Activated CD4-positive, alpha-beta memory T cell treated with anti-CD3 and anti-CD28 coated beads for 36 hours (primary cell): ENCODE measurements at regions of chr5 and their contacts with region 1.

Region 1: GRCh38 chr5:139765409-139766217 is 30.0 kb upstream of the PSD2 start:
- DNase-seq: peak; percentile 86
- H3K4me3 Mint-ChIP-seq: peak overlapping the region; percentile 50
- H3K27ac Mint-ChIP-seq: no peak overlapping the region
- H3K4me1 Mint-ChIP-seq: peaks cover 15% of the 10 kb centered on the region
- H3K27me3 Mint-ChIP-seq: peaks cover 31% of the 10 kb centered on the region

Region 2: DNA sequence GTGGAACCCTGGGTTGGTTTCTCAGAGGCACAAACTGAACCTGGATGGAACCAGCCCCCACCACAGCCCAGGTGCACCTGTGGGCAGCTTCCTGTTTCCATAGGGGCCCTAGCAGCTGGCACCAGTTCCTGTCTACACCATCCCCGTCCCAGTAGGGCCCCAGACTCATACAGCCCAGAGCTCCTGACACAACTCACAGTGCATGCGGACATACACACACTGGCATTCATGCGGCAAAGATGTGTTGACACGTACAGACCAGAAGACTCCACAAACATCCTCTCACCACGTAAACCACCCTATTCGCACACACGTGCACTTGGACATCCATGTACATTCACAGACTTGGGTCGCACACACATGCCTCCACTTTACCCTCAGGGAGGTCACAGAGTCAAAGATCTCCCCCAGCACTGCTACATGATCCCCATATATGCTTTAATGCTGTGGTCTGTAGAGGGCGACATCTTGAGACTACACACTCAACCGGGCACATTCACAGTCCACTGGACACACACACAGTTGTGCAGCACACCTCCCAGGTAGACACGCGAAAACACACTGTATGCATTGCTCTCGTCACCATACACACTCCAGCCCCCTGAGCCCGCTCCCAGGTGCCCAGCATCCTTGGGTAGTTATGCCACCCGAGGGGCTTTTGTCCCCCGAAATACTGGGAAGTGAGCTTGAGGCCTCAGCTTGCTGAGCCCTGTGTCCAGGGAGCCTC is 95.1 kb before region 1 on chr5:
- CTCF ChIA-PET with region 1: interaction called, 10 read pairs
- POLR2A ChIA-PET with region 1: no interaction called
- intact Hi-C with region 1: no loop called
- DNase-seq: peak; percentile 36
- H3K4me3 Mint-ChIP-seq: peak overlapping the region; percentile 1
- H3K27ac Mint-ChIP-seq: no peak overlapping the region
- H3K4me1 Mint-ChIP-seq: peaks cover 22% of the 10 kb centered on the region
- H3K27me3 Mint-ChIP-seq: no peaks in the 10 kb centered on the region

Region 3: DNA sequence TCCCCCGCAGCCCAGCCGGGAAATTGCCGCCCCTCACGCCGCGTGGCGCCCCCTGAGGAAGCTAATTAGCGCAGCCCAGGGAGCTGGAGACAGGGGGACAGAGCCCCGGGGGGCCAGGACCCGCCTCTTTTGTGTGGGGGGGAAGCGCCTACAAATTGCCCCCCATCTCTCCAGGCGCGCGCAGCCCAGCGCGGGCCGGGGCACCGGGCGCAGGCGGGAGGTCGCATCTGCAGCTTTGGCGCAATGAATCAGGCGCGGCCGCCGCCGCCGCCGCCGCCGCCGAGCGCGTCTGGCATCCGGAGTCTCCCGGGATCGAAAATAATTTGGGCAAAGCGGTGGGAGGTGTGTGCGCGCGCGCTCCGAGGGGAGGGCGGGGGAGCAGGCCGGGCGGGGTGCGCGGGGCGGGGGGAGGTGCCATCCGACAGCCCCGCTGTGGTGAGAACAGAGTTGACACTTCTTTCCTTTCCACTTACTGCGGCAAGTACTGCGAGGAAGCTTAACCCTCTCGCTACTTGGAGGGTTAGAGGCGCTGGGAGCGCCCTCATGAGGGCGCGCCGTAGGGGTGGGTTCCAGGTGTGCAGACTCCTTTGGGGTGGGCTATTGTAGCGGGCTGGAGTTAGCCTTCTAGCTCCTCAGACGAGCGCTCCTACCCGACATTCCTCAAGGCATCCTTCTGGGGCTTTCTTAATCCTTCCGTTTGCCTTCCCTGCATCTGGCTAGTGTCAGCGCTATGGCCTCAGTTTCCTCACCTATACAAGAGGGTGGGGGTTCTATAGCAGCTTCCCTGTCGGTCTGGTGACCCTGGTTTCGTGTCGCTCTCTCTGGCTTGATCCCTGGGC is 54.3 kb before region 1 on chr5:
- CTCF ChIA-PET with region 1: interaction called, 25 read pairs
- POLR2A ChIA-PET with region 1: no interaction called
- intact Hi-C with region 1: no loop called
- DNase-seq: peak; percentile 74
- H3K4me3 Mint-ChIP-seq: peak overlapping the region; percentile 53
- H3K27ac Mint-ChIP-seq: no peak overlapping the region
- H3K4me1 Mint-ChIP-seq: peaks cover 12% of the 10 kb centered on the region
- H3K27me3 Mint-ChIP-seq: peaks cover 14% of the 10 kb centered on the region

Region 4: GRCh38 chr5:139745800-139746690 is 19.6 kb before region 1 on chr5:
- CTCF ChIA-PET with region 1: interaction called, 106 read pairs
- POLR2A ChIA-PET with region 1: no interaction called
- intact Hi-C with region 1: no loop called
- DNase-seq: peak; percentile 64
- H3K4me3 Mint-ChIP-seq: peak overlapping the region; percentile 14
- H3K27ac Mint-ChIP-seq: no peak overlapping the region
- H3K4me1 Mint-ChIP-seq: peaks cover 21% of the 10 kb centered on the region
- H3K27me3 Mint-ChIP-seq: peaks cover 10% of the 10 kb centered on the region

Region 5: GRCh38 chr5:139808493-139809139 is 43.0 kb after region 1 on chr5:
- CTCF ChIA-PET with region 1: no interaction called
- POLR2A ChIA-PET with region 1: no interaction called
- intact Hi-C with region 1: no loop called
- DNase-seq: peak; percentile 57
- H3K4me3 Mint-ChIP-seq: no peak overlapping the region
- H3K27ac Mint-ChIP-seq: no peak overlapping the region
- H3K4me1 Mint-ChIP-seq: no peaks in the 10 kb centered on the region
- H3K27me3 Mint-ChIP-seq: peaks cover 11% of the 10 kb centered on the region

Region 6: GRCh38 chr5:139844472-139845145 is 79.0 kb after region 1 on chr5:
- CTCF ChIA-PET with region 1: interaction called, 10 read pairs
- POLR2A ChIA-PET with region 1: no interaction called
- intact Hi-C with region 1: no loop called
- DNase-seq: peak; percentile 82
- H3K4me3 Mint-ChIP-seq: peak overlapping the region; percentile 2
- H3K27ac Mint-ChIP-seq: peak overlapping the region; percentile 8
- H3K4me1 Mint-ChIP-seq: peaks cover 8% of the 10 kb centered on the region
- H3K27me3 Mint-ChIP-seq: peaks cover 22% of the 10 kb centered on the region